ENCODE measurements at regions of chr2 and their contacts with region 1.

Region 1: DNA sequence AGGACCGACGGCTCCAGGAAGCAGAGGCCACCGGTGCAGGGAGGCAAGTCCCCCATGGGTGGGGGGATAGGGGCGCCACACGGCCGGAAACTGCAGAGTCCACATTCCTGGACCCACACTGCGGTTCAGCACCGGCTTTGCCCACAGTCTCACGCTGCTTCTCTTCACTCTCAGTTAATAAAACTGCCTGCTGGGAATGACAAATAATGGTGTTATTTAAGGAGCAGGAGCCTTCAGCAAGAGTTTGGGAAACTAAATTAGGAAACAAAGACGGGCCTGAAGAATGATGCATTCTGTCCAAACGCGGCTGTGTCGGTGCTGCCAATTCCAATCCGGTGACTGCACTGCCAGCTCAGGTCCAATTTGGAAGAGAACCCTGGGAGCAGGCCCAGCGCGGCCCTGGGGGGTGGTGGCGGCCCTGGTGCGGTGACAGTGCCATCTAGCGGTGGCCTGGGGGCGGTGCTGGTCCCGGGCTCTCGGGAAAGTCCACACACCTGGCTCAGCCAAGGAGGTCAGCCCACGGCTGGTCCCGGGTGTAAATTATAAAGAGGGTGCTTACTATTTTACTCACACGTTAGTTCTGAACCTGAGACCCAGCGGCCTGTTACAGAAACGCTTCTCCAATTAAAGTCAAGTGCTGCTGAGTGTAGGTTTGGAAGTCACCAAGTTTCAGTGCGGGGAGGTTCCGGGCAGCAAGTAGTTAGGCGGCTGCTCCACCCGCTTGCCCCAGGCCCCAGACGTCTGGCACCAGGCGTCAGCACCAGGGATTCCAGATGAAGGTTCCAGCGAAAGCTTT is 73.1 kb upstream of the PXDN start:
- DNase-seq: peak; percentile 69 to 98 (median 86)

Region 2: DNA sequence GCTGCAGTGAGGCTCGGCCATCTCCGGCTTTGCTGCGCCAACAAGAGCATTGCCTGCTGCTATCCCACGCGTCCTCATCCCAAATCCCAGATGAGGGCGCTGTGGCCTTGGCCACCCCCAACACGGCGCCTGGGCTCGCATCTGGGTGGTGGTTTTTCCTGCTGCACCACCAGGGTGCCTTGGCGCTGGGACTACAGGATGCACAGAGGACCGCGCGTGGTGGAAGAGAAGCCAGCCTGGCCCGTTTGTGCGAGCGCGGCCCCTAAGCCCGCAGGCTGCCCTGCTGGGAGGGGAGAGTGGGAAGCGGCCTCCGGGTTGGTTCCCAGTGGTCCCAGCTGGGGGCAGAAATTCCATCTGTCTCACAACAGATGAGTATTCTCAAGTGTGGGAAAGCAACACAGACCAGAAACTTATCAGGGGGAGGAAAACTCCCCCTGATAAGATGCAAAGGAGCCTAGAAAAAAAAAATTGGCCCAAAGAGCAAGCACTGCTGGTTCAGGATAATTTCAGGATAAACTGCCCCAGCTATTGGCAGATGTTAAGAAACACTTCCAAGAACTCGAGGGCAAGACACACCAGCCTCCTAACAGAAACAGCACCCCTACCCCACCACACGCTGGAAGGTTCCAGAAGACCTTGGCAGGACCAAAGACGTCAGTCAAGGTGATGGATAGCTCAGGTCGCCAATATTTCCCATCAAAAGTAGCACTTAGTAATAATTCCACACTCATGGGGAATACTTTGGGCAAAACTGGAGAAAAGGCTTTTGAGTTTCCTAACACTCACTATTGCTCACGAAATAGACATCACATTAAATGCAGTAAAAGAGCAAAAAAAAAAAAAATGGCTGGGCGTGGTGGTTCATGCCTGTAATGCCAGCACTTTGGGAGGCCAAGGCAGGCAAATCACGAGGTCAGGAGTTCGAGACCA is 225.2 kb before region 1 on chr2:
- intact Hi-C with region 1: loop called (anchors 5 kb)
- DNase-seq: peak in 7 of 10 donors; percentile 26 to 94 (median 53)

Region 3: GRCh38 chr2:1750933-1751766 is 66.3 kb before region 1 on chr2:
- intact Hi-C with region 1: loop called (anchors 2 kb)
- DNase-seq: peak; percentile 57 to 97 (median 81)